Activated T-helper 1 cell treated with anti-CD3 and anti-CD28 coated beads, Interleukin-12 subunit alpha, Interleukin-12 subunit beta, Interleukin-2, Interleukin-4 antibody, amounts not matched to agents 30 ng/mL and 10 ng/mL and 1 ng/mL, durations not matched to agents 14 hours and 24 hours and 36 hours (primary cell): ENCODE measurements at regions of chr5 and their contacts with region 1.

Region 1: GRCh38 chr5:88673253-88674105 is 209.5 kb downstream of the MEF2C start:
- DNase-seq: no peak
- H3K4me3 Mint-ChIP-seq: peak overlapping the region; percentile 62
- H3K27ac Mint-ChIP-seq: peak overlapping the region; percentile 86
- H3K4me1 Mint-ChIP-seq: peaks cover 22% of the 10 kb centered on the region
- H3K27me3 Mint-ChIP-seq: peaks cover 75% of the 10 kb centered on the region

Region 2: GRCh38 chr5:88275581-88275980 is 397.9 kb before region 1 on chr5:
- intact Hi-C with region 1: no loop called
- DNase-seq: no peak
- H3K4me3 Mint-ChIP-seq: no peak overlapping the region
- H3K27ac Mint-ChIP-seq: no peak overlapping the region
- H3K4me1 Mint-ChIP-seq: peaks cover 20% of the 10 kb centered on the region
- H3K27me3 Mint-ChIP-seq: no peaks in the 10 kb centered on the region

Region 3: DNA sequence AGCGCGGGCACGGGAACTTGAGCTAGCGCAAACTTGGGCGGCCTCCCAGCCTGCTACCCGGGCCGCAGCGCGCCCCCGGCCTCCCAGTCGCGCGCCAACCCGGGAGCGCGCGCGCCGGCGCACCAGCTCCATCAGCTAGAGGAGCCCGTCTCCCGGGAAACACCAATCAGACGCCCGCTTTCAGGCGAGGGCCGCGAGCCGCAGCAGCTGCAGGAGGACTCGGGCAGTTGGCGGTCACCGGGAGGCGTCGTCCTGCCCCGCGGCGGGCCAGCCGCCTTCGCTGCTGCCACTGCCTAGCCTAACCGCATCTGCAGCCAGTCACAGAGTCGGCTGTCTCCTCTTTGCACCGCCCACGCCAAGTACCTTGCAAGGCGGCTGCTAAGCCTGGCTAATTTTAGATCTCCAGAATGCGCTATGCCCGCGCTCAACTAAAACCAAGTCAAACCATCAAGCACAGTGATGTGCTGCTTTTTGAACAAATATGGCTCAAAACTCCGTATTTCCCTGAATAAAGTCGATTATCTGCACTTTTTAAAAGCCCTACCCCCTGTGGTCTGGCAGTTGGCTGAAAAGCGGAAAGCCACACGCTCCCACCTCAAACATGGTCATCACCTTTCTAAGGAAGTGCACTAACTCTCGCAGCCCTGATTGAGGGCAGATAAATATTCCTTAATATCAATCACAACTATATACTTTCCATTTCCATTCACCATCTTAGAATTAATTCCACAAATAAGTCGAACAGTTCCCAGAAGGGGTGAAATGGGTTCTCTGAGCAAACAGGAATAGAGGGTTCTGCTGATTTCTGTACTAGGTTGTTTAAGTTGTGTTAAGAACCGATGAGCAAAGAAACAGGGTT is 12.3 kb before region 1 on chr5:
- intact Hi-C with region 1: loop called (anchors 1 kb)
- DNase-seq: no peak
- H3K4me3 Mint-ChIP-seq: peak overlapping the region; percentile 65
- H3K27ac Mint-ChIP-seq: peak overlapping the region; percentile 61
- H3K4me1 Mint-ChIP-seq: peaks cover 23% of the 10 kb centered on the region
- H3K27me3 Mint-ChIP-seq: peaks cover 71% of the 10 kb centered on the region